Tibial artery (tissue), 4 donors: ENCODE measurements at regions of chr6 and their contacts with region 1.

Region 1: GRCh38 chr6:37169496-37170272 is at the start of gene PIM1:
- DNase-seq: peak; percentile 100
- H3K4me3 ChIP-seq: peak within 1 kb of the TSS; percentile 89 to 95
- H3K27ac ChIP-seq: peak within 1 kb of the TSS; percentile 96 to 98
- H3K4me1 ChIP-seq: peaks cover 0 to 28% (median 18%) of the 10 kb centered on the region in 4 donors
- H3K27me3 ChIP-seq: no peaks in the 10 kb centered on the region
- CTCF ChIP-seq: no peak

Region 2: GRCh38 chr6:36765594-36766398 is 403.9 kb before region 1 on chr6:
- intact Hi-C with region 1: loop called (anchors 10 kb)
- DNase-seq: peak; percentile 76 to 88
- H3K4me3 ChIP-seq: no peak overlapping the region
- H3K27ac ChIP-seq: no peak overlapping the region
- H3K4me1 ChIP-seq: peaks cover 0 to 14% (median 10%) of the 10 kb centered on the region in 4 donors
- H3K27me3 ChIP-seq: no peaks in the 10 kb centered on the region
- CTCF ChIP-seq: peak; percentile 77 to 90

Region 3: GRCh38 chr6:36885461-36886401 is 284.0 kb before region 1 on chr6 and contains the start of gene C6orf89:
- intact Hi-C with region 1: loop called (anchors 10 kb)
- DNase-seq: peak; percentile 98 to 99
- H3K4me3 ChIP-seq: peak within 1 kb of the TSS; percentile 75 to 77
- H3K27ac ChIP-seq: peak within 1 kb of the TSS; percentile 86 to 89
- H3K4me1 ChIP-seq: peaks cover 0 to 25% (median 17%) of the 10 kb centered on the region in 4 donors
- H3K27me3 ChIP-seq: no peaks in the 10 kb centered on the region
- CTCF ChIP-seq: peak; percentile 86 to 95

Region 4: DNA sequence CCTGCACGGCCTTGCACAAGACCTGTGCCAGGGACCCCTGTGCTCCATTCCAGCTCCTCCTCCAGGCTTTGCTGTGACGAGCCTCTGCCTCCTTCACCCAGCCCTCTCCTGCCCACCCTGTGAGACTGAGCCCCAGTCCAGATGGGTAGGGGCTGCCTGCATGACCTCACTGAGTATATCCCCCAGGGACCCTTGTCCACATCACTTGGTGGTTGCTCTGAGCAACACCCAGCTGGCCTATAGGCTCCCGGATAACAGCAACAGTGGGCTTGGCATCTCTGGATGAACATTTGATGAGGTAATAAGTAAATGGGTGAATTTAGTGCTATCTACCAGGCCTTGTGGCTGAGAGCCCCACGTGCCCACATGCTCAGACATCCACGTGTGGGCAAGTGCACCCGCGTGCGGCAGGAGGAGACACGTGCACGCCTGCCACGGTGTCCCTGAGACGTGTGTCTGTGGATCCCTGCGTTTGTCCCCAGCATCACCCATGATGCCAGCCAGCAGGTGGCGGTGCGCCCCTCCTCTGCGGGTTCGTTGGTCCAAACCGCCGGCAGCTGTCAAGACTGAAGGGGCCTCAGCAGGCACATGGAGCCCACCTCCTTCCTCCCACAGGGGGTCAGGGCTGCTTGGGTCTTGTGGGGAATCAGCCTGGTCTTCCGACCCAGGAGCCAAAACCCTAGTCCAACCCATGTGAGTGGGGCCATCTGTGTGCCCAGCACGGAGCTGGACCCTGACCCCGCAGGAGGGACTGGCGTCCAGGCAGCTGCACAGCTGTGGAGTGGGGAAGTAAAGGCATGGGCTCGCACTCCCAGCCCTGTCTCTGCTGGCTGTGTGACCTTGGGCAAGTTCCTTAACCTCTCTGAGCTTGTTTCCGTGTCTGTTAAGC is 118.3 kb before region 1 on chr6:
- intact Hi-C with region 1: loop called (anchors 1 kb)
- DNase-seq: peak; percentile 87 to 93
- H3K4me3 ChIP-seq: no peak overlapping the region
- H3K27ac ChIP-seq: no peak overlapping the region
- H3K4me1 ChIP-seq: peaks cover 0 to 10% (median 1%) of the 10 kb centered on the region in 4 donors
- H3K27me3 ChIP-seq: peaks cover 0 to 6% of the 10 kb centered on the region in 2 donors
- CTCF ChIP-seq: peak; percentile 90 to 91

Region 5: DNA sequence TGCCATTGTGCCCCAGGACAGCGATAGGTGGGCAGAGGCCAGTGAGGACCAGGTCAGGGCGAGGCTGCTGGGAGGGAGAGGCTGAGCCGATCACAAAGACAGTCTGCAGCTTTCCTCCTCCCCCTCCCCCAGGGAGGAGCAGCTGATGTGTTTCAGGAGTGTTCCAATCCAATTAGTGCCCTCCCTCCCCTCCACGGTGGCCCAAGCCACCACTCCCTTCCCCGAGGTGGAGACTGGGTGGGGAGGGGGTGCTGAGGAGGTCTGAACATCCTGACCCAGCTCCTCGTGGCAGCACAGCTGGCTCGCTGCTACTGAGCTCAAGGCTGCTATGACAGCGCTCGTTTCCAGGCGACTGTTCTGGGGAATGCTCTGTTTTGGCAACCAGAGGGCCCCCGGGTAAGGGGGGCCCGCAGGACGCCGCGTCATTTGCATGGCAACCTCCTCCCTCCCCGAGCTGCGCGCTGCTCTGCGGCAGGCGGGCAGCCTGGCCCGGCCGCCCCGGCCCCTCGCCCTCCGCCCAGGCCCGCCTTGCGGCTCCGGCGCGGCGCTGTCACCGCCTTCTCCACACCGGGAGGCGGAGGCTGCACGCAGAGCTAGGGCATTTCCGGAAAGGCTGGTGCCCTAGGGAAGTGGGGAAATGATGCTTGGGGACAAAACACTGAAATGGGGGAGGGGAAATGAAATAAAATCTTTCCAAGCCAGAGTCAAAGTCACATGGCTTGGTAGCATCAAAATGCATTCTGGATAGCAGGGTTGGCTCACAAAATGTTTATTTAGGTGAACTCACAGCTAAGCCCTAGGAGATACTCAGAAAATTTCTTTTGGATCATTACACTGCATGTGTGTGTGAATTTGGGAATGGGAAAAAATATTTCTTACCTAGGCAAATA is 67.2 kb before region 1 on chr6:
- intact Hi-C with region 1: loop called (anchors 2 kb)
- DNase-seq: peak; percentile 90 to 94
- H3K4me3 ChIP-seq: peak overlapping the region; percentile 45 to 46
- H3K27ac ChIP-seq: peak overlapping the region; percentile 70 to 87
- H3K4me1 ChIP-seq: peaks cover 0 to 27% (median 14%) of the 10 kb centered on the region in 4 donors
- H3K27me3 ChIP-seq: no peaks in the 10 kb centered on the region
- CTCF ChIP-seq: peak in 1 of 2 experiments; percentile 20

Region 6: DNA sequence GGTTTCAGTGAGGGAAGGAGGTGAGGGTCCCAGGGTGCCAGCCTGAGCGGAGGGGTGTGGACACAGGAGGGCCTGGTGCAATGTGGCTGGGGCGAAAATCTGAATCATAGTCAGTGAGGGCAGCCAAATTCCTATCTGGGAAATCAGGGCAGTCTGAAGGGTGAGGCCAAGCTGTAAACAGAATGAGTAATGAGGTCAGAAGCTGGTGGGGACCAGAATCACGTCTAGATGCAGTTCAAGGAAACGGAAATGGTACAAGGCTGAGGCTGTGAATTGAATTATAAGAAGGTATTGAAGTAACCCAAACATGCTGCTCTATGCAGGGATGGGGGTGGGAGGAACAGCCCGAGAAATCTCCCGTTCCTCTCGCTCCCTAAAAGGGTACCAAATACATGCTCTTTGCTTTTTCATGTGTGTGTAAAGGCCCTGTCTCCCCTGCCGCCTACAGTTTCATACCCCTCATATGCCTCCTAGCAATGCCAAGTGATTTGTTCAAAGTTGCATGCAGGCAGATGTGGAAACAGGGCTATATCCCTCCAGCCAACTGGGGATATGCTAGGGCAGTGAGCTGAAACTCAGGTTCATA is 35.0 kb before region 1 on chr6:
- intact Hi-C with region 1: loop called (anchors 2 kb)
- DNase-seq: peak; percentile 78 to 89
- H3K4me3 ChIP-seq: no peak overlapping the region
- H3K27ac ChIP-seq: peak overlapping the region; percentile 80 to 85
- H3K4me1 ChIP-seq: peaks cover 7 to 69% (median 39%) of the 10 kb centered on the region in 4 donors
- H3K27me3 ChIP-seq: no peaks in the 10 kb centered on the region
- CTCF ChIP-seq: no peak